CD8-positive, alpha-beta T cell (primary cell): ENCODE measurements at regions of chrX and their contacts with region 1.

Region 1: DNA sequence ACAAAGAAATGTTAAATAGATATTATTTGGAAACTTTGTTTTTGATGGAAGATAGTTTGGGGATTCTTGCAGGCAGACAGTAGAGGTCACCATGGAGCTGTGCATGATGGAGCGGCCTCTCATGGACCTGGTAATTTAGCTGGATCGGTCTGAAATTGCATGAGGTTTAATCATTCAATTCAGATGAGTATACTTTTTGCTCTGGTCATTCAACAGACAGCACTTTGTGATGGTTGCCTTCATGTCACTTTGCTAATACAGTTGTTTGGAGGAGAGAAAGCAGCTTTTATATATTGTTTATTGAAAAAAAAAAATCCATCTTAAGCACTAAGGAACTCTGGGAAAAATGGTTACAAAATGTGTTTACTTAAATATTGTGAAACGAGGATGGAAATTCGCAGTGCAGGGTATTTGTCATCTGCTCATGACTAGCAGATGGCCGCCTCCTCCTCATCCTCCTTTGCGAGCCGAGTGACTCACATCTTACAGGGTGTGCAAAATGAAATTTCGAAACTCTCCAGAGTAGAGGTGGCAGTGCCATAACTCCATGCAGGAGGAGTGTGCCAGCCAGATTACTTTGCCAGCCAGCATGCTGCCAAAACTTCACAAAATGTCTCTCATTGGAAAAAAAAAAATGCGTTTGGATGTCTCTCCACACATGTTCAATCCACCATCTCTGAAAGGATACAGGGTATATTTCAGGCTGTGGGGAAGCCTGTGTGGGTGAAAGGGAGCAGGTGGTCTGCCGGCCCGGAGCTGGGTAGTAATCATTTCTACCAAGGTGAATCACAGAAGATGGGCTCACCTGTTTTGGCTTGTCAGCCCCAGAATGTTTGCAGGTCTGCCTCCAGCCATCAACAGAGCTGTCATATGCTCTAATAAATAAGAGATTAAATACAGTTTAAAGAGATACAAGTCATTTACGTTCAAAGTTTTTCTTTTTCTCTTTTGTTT is 314.9 kb upstream of the DIPK2B start:
- DNase-seq: peak in 4 of 9 experiments; percentile 10 to 58 (median 31)
- ATAC-seq: no peak
- H3K4me3 ChIP-seq: no peak overlapping the region
- H3K4me3 Mint-ChIP-seq: no peak overlapping the region
- H3K27ac ChIP-seq: no peak overlapping the region
- H3K27ac Mint-ChIP-seq: no peak overlapping the region
- H3K4me1 ChIP-seq: no peaks in the 10 kb centered on the region
- H3K4me1 Mint-ChIP-seq: no peaks in the 10 kb centered on the region
- H3K27me3 ChIP-seq: peaks cover 0 to 3% of the 10 kb centered on the region in 2 experiments
- H3K27me3 Mint-ChIP-seq: no peaks in the 10 kb centered on the region
- CTCF ChIP-seq: no peak

Region 2: DNA sequence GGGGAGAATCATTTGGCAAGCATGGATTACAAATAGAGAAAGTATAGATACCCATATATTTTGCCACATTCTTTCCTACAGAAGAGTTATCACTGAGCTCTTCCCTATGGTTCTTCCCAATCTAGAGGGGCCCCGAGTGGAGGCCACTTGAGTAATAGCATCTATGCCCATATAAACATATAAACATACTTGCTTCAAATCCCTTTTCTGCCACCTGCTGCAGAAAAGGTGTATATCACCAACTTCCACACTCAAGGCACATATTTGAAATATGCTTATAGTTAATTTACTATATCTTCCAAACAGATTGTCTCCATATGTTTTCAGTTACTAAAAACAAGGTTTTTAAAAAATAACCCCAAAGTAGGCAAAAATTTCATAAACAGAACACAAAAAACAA is 328.0 kb after region 1 on chrX:
- CTCF ChIA-PET with region 1: interaction called, 9 read pairs
- POLR2A ChIA-PET with region 1: no interaction called
- intact Hi-C with region 1: loop called in 1 of 2 experiments (anchors 2 kb)
- DNase-seq: peak in 2 of 9 experiments; percentile 42 to 56
- ATAC-seq: no peak
- H3K4me3 ChIP-seq: no peak overlapping the region
- H3K4me3 Mint-ChIP-seq: no peak overlapping the region
- H3K27ac ChIP-seq: no peak overlapping the region
- H3K27ac Mint-ChIP-seq: no peak overlapping the region
- H3K4me1 ChIP-seq: no peaks in the 10 kb centered on the region
- H3K4me1 Mint-ChIP-seq: peaks cover 11% of the 10 kb centered on the region
- H3K27me3 ChIP-seq: no peaks in the 10 kb centered on the region
- H3K27me3 Mint-ChIP-seq: no peaks in the 10 kb centered on the region
- CTCF ChIP-seq: peak; percentile 24

Region 3: DNA sequence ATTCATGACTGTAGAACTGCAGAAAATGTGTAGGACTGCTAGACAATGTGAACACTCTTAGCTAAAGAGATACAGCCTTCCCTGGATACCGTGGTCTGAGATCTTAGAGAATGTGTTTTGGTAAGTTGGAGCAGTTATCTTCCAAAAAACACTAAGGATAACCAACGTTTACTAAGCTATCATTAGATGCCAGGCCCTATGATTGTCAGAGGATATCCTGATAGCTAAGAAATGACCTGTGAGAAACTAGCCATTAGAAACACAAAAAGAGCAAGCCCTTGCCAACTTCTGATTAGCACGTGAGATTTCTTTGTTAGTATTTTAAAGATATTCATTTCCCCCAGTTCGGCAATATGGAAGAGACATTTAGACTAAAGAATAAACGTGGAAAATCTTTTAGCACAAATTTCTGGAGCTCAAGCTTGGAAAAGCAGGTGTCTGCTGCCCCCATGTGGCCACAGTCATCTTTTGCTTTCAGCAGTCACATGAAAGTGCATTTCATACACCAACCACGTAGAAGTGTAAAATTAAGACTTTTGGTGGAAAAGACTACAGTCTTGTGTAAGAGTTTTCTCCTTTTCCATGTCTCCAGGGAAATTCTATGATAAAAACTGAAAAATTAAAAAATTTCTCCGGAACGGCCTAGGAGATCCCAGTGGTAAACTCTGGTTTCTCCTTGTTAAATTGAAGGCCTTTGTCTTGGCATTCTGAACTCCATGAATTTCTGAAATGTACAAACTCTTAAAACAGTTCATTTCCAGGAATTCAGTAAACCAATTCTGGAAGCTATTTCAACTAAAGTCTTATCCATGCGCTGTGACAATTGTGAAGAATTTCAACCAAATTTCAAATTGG is 893.2 kb after region 1 on chrX:
- CTCF ChIA-PET with region 1: interaction called, 13 read pairs
- POLR2A ChIA-PET with region 1: no interaction called
- intact Hi-C with region 1: loop called in 1 of 2 experiments (anchors 1 kb)
- DNase-seq: peak; percentile 28 to 70 (median 64)
- ATAC-seq: no peak
- H3K4me3 ChIP-seq: no peak overlapping the region
- H3K4me3 Mint-ChIP-seq: no peak overlapping the region
- H3K27ac ChIP-seq: no peak overlapping the region
- H3K27ac Mint-ChIP-seq: no peak overlapping the region
- H3K4me1 ChIP-seq: no peaks in the 10 kb centered on the region
- H3K4me1 Mint-ChIP-seq: no peaks in the 10 kb centered on the region
- H3K27me3 ChIP-seq: no peaks in the 10 kb centered on the region
- H3K27me3 Mint-ChIP-seq: no peaks in the 10 kb centered on the region
- CTCF ChIP-seq: peak; percentile 60